ENCODE measurements at regions of chr7 and their contacts with region 1.

Region 1: DNA sequence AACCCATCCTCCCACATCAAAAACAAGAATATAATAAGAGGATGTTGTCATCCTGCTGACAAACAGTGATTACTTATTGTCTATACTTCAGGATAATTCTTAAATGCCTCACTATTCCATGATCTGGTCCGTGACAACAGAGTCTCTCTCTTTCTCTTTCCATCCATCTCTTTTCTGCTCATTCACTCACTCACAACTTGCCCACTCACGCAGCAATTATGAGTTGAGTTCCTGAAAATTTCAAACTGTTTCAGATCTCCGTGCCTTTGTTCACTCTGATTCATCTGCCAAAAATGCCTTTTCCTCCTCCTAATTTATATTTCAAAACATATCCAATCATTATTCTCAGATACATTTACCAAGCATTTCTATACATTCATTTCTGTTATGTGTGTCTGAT is 1.4 kb downstream of the OR6B1 start:
- DNase-seq: no peak
- H3K4me3 ChIP-seq: no peak overlapping the region
- H3K27ac ChIP-seq: no peak overlapping the region
- H3K4me1 ChIP-seq: no peaks in the 10 kb centered on the region
- H3K27me3 ChIP-seq: no peaks in the 10 kb centered on the region
- CTCF ChIP-seq: no peak

Region 2: GRCh38 chr7:143958781-143959180 is 42.8 kb before region 1 on chr7:
- intact Hi-C with region 1: loop called (anchors 10 kb)
- DNase-seq: no peak
- H3K4me3 ChIP-seq: no peak overlapping the region
- H3K27ac ChIP-seq: no peak overlapping the region
- H3K4me1 ChIP-seq: peaks cover 0 to 2% of the 10 kb centered on the region in 2 donors
- H3K27me3 ChIP-seq: no peaks in the 10 kb centered on the region
- CTCF ChIP-seq: no peak

Region 3: DNA sequence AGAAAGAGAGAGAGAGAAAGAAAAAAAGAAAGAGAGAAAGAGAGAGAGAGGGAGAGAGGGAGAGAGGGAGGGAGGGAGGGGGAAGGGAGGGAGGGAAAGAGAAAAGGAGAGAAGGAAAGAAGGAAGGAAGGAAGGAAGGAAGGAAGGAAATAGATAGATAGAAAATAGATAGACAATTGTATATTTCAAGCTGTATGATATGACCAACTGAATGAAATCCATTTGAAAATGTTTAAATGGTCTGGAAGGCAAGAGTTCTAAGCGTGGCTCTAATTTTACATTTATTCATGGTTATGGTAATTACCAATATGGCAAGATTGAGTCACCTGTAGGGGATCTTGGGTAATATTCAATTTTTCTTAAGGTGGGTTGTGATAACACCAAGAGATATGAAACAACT is 157.3 kb after region 1 on chr7:
- intact Hi-C with region 1: no loop called
- DNase-seq: no peak
- H3K4me3 ChIP-seq: no peak overlapping the region
- H3K27ac ChIP-seq: no peak overlapping the region
- H3K4me1 ChIP-seq: no peaks in the 10 kb centered on the region
- H3K27me3 ChIP-seq: no peaks in the 10 kb centered on the region
- CTCF ChIP-seq: no peak

Measured in ascending aorta (tissue), 2 donors.